MCF 10A (cell line): ENCODE measurements at regions of chr19 and their contacts with region 1.

Region 1: GRCh38 chr19:18281082-18282020 is at the start of gene JUND:
- DNase-seq: peak; percentile 97
- H3K4me3 Mint-ChIP-seq: peak within 1 kb of the TSS; percentile 87
- H3K27ac Mint-ChIP-seq: peak within 1 kb of the TSS; percentile 98
- H3K4me1 Mint-ChIP-seq: peaks cover 13% of the 10 kb centered on the region
- H3K27me3 Mint-ChIP-seq: no peaks in the 10 kb centered on the region
- CTCF ChIP-seq: no peak
- total RNA-seq, gene JUND: 120 and 123 TPM in 2 replicates

Region 2: DNA sequence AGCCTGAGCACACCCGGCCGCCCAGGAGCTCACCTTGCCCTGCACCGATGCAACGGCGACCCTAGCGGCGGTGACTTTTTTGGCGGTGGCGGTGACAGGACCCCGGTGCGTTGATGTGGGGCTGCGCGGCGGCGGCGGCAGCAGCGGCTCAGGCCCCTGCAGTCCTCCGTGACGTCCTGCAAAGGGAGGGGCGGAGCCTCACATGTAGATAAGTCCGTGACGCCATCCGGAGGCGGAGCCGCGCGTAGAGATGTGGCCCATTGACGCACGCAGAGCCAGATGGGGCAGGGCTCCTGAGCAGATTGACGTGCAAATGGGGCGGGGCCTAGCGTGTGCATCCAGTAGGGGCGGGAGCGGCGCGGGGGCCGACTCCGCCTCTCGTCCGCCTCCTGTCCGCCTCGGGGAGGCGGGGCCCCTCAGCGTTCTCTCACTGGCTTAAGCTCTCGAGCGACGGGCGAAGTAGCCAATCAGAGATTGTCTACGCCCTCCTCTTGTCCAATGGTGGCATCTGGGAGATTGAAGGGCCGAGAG is 77.4 kb before region 1 on chr19 and contains the start of gene RAB3A:
- CTCF ChIA-PET with region 1: interaction called, 8 read pairs
- POLR2A ChIA-PET with region 1: interaction called, 43 read pairs
- intact Hi-C with region 1: no loop called
- DNase-seq: peak; percentile 100
- H3K4me3 Mint-ChIP-seq: peak within 1 kb of the TSS; percentile 95
- H3K27ac Mint-ChIP-seq: peak within 1 kb of the TSS; percentile 95
- H3K4me1 Mint-ChIP-seq: peaks cover 5% of the 10 kb centered on the region
- H3K27me3 Mint-ChIP-seq: no peaks in the 10 kb centered on the region
- CTCF ChIP-seq: no peak
- total RNA-seq, gene RAB3A: 0.68 and 0.81 TPM in 2 replicates

Region 3: DNA sequence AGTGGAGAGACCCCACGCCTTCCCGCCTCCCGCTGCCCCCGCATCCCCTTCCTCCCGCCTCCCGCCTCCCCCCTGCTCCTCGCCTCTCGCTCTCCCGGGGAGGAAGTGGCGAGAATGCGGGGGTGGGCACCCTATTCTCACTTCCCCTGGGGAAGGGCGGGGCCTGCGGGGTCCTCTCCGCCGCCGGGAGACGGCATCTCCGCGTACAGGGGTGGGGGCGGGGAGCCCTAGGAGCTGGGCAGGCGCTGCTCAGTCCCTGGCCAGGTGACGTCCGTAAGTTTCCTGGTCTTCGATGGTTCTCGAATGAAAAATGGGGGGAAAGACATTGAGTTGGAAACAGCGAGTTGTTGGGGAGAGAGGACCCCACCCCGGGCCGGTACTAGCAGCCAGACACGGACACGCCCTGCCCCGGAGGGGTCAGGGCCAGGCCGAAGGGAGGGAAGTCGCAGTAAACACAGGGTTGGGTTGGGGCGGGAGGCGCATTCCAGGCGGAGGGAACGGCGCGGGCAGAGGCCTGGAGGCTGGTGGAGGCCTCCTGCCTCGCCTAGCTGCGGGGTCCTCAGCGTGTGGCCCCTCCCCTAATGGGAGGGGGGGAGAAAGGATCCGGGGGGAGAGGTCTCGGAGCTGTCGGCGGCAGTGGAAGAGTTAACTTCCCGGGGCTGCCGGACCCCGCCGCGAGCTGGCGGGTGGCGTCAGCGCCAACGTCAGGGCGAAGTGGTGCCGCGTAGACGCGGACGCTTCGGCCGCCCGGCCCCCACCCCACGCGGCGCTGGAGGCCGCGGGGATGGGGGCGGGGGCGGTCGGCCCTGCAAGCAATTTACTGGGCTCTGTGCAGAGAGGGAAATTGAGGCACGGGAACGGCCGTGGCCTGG is 10.5 kb after region 1 on chr19:
- CTCF ChIA-PET with region 1: interaction called, 15 read pairs
- POLR2A ChIA-PET with region 1: interaction called, 170 read pairs
- intact Hi-C with region 1: no loop called
- DNase-seq: peak; percentile 70
- H3K4me3 Mint-ChIP-seq: peak overlapping the region; percentile 78
- H3K27ac Mint-ChIP-seq: peak overlapping the region; percentile 97
- H3K4me1 Mint-ChIP-seq: peaks cover 19% of the 10 kb centered on the region
- H3K27me3 Mint-ChIP-seq: no peaks in the 10 kb centered on the region
- CTCF ChIP-seq: no peak

Region 4: DNA sequence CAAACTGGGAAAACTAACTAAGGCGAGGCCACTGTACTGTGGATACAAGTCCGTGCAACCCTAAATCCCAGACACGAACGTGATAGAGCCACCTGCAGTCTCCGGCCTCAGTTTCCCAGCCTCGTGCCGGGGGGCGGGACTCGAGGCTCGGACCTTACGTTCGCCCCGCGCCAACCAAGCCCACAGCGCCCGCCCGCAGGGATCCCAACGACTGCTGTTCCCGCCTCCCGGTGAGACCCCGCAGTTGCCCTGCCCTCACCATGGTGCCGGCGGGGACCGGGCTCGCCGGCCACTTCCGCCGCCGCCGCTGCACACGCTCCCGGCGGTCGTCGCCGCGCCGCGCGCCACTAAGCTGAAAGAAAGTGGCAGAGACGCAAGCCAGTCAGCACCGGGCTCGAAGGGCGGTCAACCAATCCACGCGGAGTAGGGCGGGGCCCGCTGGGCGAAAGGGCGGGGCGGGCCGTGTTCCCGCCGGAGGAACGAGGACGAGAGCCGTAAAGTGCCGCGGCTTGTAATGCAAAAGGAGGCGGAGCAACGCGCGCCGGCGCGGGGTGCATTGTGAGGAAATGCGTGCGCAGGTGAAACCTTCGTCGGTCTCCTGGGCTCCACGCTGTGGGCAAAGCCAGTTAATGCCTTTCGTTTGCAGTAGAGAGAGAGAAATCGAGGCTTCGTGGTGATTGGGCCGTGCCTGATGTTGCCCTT is 41.6 kb after region 1 on chr19 and contains the start of gene LSM4:
- CTCF ChIA-PET with region 1: interaction called, 257 read pairs
- POLR2A ChIA-PET with region 1: interaction called, 178 read pairs
- intact Hi-C with region 1: loop called (anchors 1 kb)
- DNase-seq: peak; percentile 99
- H3K4me3 Mint-ChIP-seq: peak within 1 kb of the TSS; percentile 83
- H3K27ac Mint-ChIP-seq: peak within 1 kb of the TSS; percentile 91
- H3K4me1 Mint-ChIP-seq: peaks cover 33% of the 10 kb centered on the region
- H3K27me3 Mint-ChIP-seq: no peaks in the 10 kb centered on the region
- CTCF ChIP-seq: peak; percentile 38
- total RNA-seq, gene LSM4: 172 and 193 TPM in 2 replicates

Region 5: DNA sequence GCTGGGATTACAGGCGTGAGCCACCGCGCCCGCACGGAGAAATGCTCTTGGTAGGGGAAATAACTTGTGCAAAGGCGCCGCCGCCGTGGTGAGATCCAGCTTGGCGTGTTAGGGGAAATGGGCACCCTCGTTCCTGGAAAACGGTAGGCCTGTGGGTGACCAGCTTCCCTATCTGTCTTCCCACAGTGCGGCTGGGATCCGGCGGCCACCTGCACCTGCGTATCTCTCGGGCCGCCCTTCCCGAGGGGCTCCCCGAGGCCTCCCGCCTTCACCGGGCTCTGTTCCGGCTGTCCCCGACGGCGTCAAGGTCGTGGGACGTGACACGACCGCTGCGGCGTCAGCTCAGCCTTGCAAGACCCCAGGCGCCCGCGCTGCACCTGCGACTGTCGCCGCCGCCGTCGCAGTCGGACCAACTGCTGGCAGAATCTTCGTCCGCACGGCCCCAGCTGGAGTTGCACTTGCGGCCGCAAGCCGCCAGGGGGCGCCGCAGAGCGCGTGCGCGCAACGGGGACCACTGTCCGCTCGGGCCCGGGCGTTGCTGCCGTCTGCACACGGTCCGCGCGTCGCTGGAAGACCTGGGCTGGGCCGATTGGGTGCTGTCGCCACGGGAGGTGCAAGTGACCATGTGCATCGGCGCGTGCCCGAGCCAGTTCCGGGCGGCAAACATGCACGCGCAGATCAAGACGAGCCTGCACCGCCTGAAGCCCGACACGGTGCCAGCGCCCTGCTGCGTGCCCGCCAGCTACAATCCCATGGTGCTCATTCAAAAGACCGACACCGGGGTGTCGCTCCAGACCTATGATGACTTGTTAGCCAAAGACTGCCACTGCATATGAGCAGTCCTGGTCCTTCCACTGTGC is 107.0 kb after region 1 on chr19:
- CTCF ChIA-PET with region 1: interaction called, 5 read pairs
- POLR2A ChIA-PET with region 1: interaction called, 30 read pairs
- intact Hi-C with region 1: no loop called
- DNase-seq: peak; percentile 54
- H3K4me3 Mint-ChIP-seq: peak overlapping the region; percentile 79
- H3K27ac Mint-ChIP-seq: no peak overlapping the region
- H3K4me1 Mint-ChIP-seq: peaks cover 23% of the 10 kb centered on the region
- H3K27me3 Mint-ChIP-seq: no peaks in the 10 kb centered on the region
- CTCF ChIP-seq: peak; percentile 95

Region 6: GRCh38 chr19:18441804-18442788 is 160.7 kb after region 1 on chr19:
- CTCF ChIA-PET with region 1: no interaction called
- POLR2A ChIA-PET with region 1: no interaction called
- intact Hi-C with region 1: no loop called
- DNase-seq: no peak
- H3K4me3 Mint-ChIP-seq: peak overlapping the region; percentile 28
- H3K27ac Mint-ChIP-seq: peak overlapping the region; percentile 88
- H3K4me1 Mint-ChIP-seq: peaks cover 33% of the 10 kb centered on the region
- H3K27me3 Mint-ChIP-seq: no peaks in the 10 kb centered on the region
- CTCF ChIP-seq: no peak